ENCODE measurements at regions of chr14 and their contacts with region 1.

Region 1: GRCh38 chr14:106141242-106142220 is 615.1 kb downstream of the TMEM121 start:
- DNase-seq: no peak
- ATAC-seq: peak; percentile 91
- H3K4me3 ChIP-seq: no peak overlapping the region
- H3K27ac ChIP-seq: no peak overlapping the region
- H3K4me1 ChIP-seq: no peaks in the 10 kb centered on the region
- H3K27me3 ChIP-seq: no peaks in the 10 kb centered on the region
- CTCF ChIP-seq: peak in 2 of 3 experiments; percentile 27 to 39; a peak in 3 of 6 replicates
- EP300 ChIP-seq: no peak
- POLR2A ChIP-seq: no peak
- RAD21 ChIP-seq: no peak

Region 2: DNA sequence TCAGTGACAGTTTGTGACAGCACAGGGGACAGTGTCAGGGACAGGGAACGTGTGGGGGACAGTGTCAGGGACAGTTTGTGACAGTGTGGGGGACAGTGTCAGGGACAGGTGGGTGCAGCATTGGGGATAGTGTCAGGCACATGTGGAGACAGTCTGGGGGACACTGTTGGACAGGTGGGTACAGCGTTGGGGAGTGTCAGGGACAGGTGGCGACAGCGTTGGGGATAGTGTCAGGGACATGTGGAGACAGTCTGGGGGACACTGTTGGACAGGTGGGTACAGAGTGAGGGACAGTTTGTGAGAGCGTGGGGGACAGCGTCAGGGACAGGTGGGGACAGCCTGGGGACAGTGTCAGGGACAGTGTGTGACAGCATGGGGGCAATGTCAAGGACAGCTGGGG is 475.1 kb before region 1 on chr14:
- CTCF ChIA-PET with region 1: no interaction called
- POLR2A ChIA-PET with region 1: no interaction called
- RAD21 ChIA-PET with region 1: no interaction called
- SMC1A ChIA-PET with region 1: no interaction called
- in situ Hi-C with region 1: loop called (anchors 25 kb)
- intact Hi-C with region 1: no loop called
- DNase-seq: no peak
- ATAC-seq: no peak
- H3K4me3 ChIP-seq: no peak overlapping the region
- H3K27ac ChIP-seq: no peak overlapping the region
- H3K4me1 ChIP-seq: no peaks in the 10 kb centered on the region
- H3K27me3 ChIP-seq: no peaks in the 10 kb centered on the region
- CTCF ChIP-seq: no peak
- EP300 ChIP-seq: no peak
- POLR2A ChIP-seq: no peak
- RAD21 ChIP-seq: no peak

Region 3: DNA sequence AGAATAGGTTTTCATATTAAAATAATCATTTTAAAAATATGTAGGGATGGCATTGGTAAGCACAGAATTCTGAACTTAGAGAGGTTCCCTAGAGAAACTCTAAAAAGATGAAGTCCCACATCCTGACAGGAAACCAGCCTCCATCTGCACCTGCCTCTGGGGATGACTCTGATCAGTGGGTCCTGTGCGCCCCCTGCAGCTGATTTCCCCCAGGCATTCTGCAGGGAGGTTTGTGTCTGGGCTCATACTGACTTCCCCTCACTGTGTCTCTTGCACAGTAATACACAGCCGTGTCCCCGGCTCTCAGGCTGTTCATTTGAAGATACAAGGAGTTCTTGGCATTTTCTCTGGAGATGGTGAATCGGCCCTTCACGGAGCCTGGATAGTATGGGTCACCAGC is 12.3 kb before region 1 on chr14:
- CTCF ChIA-PET with region 1: interaction called, 11 read pairs
- POLR2A ChIA-PET with region 1: no interaction called
- RAD21 ChIA-PET with region 1: no interaction called
- SMC1A ChIA-PET with region 1: interaction called, 4 read pairs
- in situ Hi-C with region 1: no loop called
- intact Hi-C with region 1: no loop called
- DNase-seq: no peak
- ATAC-seq: peak; percentile 48; the same call in 1 of the 3 replicates
- H3K4me3 ChIP-seq: no peak overlapping the region
- H3K27ac ChIP-seq: no peak overlapping the region
- H3K4me1 ChIP-seq: no peaks in the 10 kb centered on the region
- H3K27me3 ChIP-seq: no peaks in the 10 kb centered on the region; a peak in 1 of 4 replicates
- CTCF ChIP-seq: peak; percentile 23 to 44 (median 42); a peak in 4 of 6 replicates
- EP300 ChIP-seq: no peak
- POLR2A ChIP-seq: no peak
- RAD21 ChIP-seq: no peak

Region 4: GRCh38 chr14:106294324-106294723 is 152.8 kb after region 1 on chr14:
- CTCF ChIA-PET with region 1: no interaction called
- POLR2A ChIA-PET with region 1: no interaction called
- RAD21 ChIA-PET with region 1: no interaction called
- SMC1A ChIA-PET with region 1: no interaction called
- in situ Hi-C with region 1: no loop called
- intact Hi-C with region 1: no loop called
- DNase-seq: no peak
- ATAC-seq: no peak; the same call in 2 of the 3 replicates
- H3K4me3 ChIP-seq: no peak overlapping the region
- H3K27ac ChIP-seq: no peak overlapping the region
- H3K4me1 ChIP-seq: no peaks in the 10 kb centered on the region; the same call in 1 of the 2 replicates
- H3K27me3 ChIP-seq: no peaks in the 10 kb centered on the region; a peak in 1 of 4 replicates
- CTCF ChIP-seq: no peak
- EP300 ChIP-seq: no peak
- POLR2A ChIP-seq: no peak
- RAD21 ChIP-seq: no peak

Region 5: DNA sequence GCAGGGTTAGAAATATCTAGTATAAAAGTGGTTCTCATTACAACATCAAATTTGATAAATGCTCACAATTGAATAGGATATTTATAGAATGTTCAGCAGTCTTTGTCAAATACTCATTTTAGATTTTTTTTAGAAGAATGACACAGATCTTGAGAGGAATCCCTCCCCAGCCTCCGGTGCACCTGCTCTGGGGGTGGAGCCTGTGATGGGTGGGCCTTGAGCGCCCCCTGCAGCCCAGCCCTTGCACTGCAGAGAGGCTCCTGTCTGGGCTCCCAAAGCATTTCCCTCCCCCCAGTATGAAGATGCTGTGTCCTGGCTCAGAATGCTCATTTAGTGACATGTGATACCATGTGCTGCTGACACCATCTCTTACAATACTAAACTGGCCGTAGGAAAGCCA is 177.2 kb after region 1 on chr14:
- CTCF ChIA-PET with region 1: no interaction called
- POLR2A ChIA-PET with region 1: no interaction called
- RAD21 ChIA-PET with region 1: no interaction called
- SMC1A ChIA-PET with region 1: no interaction called
- in situ Hi-C with region 1: no loop called
- intact Hi-C with region 1: no loop called
- DNase-seq: no peak
- ATAC-seq: peak; percentile 79
- H3K4me3 ChIP-seq: no peak overlapping the region
- H3K27ac ChIP-seq: no peak overlapping the region
- H3K4me1 ChIP-seq: no peaks in the 10 kb centered on the region; the same call in 1 of the 2 replicates
- H3K27me3 ChIP-seq: no peaks in the 10 kb centered on the region
- CTCF ChIP-seq: peak; percentile 59 to 89 (median 87)
- EP300 ChIP-seq: no peak
- POLR2A ChIP-seq: no peak
- RAD21 ChIP-seq: 0 out of 2 replicates have a peak, but pooled peaks have one; percentile 13